A673 (cell line): ENCODE measurements at regions of chr5 and their contacts with region 1.

Region 1: DNA sequence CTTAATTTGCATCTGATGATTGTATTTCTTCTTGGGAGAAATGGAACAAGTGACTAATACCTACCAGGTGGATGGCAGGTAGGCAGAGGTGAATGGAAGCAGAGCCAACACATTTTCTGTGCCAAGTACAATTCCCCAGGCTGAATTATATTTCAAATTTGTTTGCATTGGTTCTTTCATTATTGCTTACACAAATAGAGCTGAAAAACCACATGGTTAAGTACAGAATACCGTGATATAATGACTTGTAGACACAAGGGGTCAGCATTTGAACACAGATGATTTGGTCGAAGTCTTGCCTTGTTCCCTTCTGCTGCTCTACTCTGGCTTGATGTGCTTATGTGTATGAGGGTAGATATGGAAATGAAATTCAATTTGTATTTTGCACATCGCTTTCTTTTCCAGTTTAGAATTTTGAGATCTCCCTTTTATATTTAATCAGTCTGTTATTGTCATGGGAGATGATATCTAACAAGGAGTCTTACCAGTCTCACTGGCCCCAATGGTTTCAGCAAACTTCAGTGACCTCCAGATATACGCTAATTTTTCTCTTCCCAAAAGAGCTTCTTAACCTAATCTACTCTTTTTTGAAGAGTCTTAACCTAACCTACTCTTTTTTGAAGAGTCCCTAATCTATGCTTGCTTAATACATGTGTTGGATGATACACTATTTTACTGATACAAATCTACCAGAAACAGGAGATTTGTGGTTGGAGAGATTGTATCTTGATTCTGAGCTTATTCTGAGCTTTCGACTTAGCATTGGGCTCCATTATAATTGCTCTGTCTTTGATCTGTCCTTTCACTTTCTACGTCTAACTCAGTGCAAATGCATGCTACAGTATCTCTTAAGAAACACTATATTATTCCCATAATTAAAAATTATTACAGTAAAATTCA is 88.1 kb downstream of the PCSK1 start:
- DNase-seq: peak; percentile 81
- H3K4me3 ChIP-seq: no peak overlapping the region
- H3K27ac ChIP-seq: no peak overlapping the region
- H3K4me1 ChIP-seq: no peaks in the 10 kb centered on the region
- H3K27me3 ChIP-seq: no peaks in the 10 kb centered on the region
- CTCF ChIP-seq: peak; percentile 68

Region 2: GRCh38 chr5:96601811-96602244 is 256.9 kb after region 1 on chr5:
- CTCF ChIA-PET with region 1: interaction called, 25 read pairs
- POLR2A ChIA-PET with region 1: no interaction called
- intact Hi-C with region 1: loop called (anchors 1 kb)
- DNase-seq: peak; percentile 85
- H3K4me3 ChIP-seq: no peak overlapping the region
- H3K27ac ChIP-seq: no peak overlapping the region
- H3K4me1 ChIP-seq: peaks cover 6% of the 10 kb centered on the region
- H3K27me3 ChIP-seq: no peaks in the 10 kb centered on the region
- CTCF ChIP-seq: peak; percentile 83

Region 3: GRCh38 chr5:96687812-96688453 is 343.0 kb after region 1 on chr5:
- CTCF ChIA-PET with region 1: no interaction called
- POLR2A ChIA-PET with region 1: no interaction called
- intact Hi-C with region 1: loop called (anchors 5 kb)
- DNase-seq: peak; percentile 76
- H3K4me3 ChIP-seq: peak overlapping the region; percentile 21
- H3K27ac ChIP-seq: no peak overlapping the region
- H3K4me1 ChIP-seq: no peaks in the 10 kb centered on the region
- H3K27me3 ChIP-seq: no peaks in the 10 kb centered on the region
- CTCF ChIP-seq: peak; percentile 76

Region 4: GRCh38 chr5:96729156-96729555 is 384.2 kb after region 1 on chr5:
- CTCF ChIA-PET with region 1: no interaction called
- POLR2A ChIA-PET with region 1: no interaction called
- intact Hi-C with region 1: loop called (anchors 10 kb)
- DNase-seq: no peak
- H3K4me3 ChIP-seq: no peak overlapping the region
- H3K27ac ChIP-seq: no peak overlapping the region
- H3K4me1 ChIP-seq: no peaks in the 10 kb centered on the region
- H3K27me3 ChIP-seq: no peaks in the 10 kb centered on the region
- CTCF ChIP-seq: peak; percentile 59

Region 5: GRCh38 chr5:96997265-96997859 is 652.4 kb after region 1 on chr5:
- CTCF ChIA-PET with region 1: no interaction called
- POLR2A ChIA-PET with region 1: no interaction called
- intact Hi-C with region 1: loop called (anchors 10 kb)
- DNase-seq: peak; percentile 67
- H3K4me3 ChIP-seq: no peak overlapping the region
- H3K27ac ChIP-seq: no peak overlapping the region
- H3K4me1 ChIP-seq: no peaks in the 10 kb centered on the region
- H3K27me3 ChIP-seq: no peaks in the 10 kb centered on the region
- CTCF ChIP-seq: peak; percentile 68

Region 6: GRCh38 chr5:97142521-97143254 is 797.8 kb after region 1 on chr5 and contains the start of gene LIX1:
- CTCF ChIA-PET with region 1: interaction called, 3 read pairs
- POLR2A ChIA-PET with region 1: no interaction called
- intact Hi-C with region 1: loop called (anchors 5 kb)
- DNase-seq: peak; percentile 86
- H3K4me3 ChIP-seq: no peak within 1 kb of the TSS
- H3K27ac ChIP-seq: no peak within 1 kb of the TSS
- H3K4me1 ChIP-seq: no peaks in the 10 kb centered on the region
- H3K27me3 ChIP-seq: no peaks in the 10 kb centered on the region
- CTCF ChIP-seq: peak; percentile 75
- total RNA-seq, gene LIX1: not detected in 2 replicates

Region 7: GRCh38 chr5:97162045-97162444 is 817.1 kb after region 1 on chr5:
- CTCF ChIA-PET with region 1: no interaction called
- POLR2A ChIA-PET with region 1: no interaction called
- intact Hi-C with region 1: loop called (anchors 2 kb)
- DNase-seq: peak; percentile 82
- H3K4me3 ChIP-seq: no peak overlapping the region
- H3K27ac ChIP-seq: no peak overlapping the region
- H3K4me1 ChIP-seq: no peaks in the 10 kb centered on the region
- H3K27me3 ChIP-seq: no peaks in the 10 kb centered on the region
- CTCF ChIP-seq: peak; percentile 86